Activated T-helper 2 cell treated with anti-CD3 and anti-CD28 coated beads, Interferon-gamma antibody, Interleukin-2, Interleukin-4, amounts not matched to agents 10 μg/mL and 5 μg/mL and 100 μg/mL, durations not matched to agents 14 hours and 24 hours and 36 hours (primary cell): ENCODE measurements at regions of chr1 and their contacts with region 1.

Region 1: GRCh38 chr1:204363335-204364124 is 3.8 kb upstream of the PLEKHA6 start:
- DNase-seq: peak; percentile 64
- H3K4me3 Mint-ChIP-seq: peak overlapping the region; percentile 71
- H3K27ac Mint-ChIP-seq: peak overlapping the region; percentile 82
- H3K4me1 Mint-ChIP-seq: peaks cover 48% of the 10 kb centered on the region
- H3K27me3 Mint-ChIP-seq: peaks cover 3% of the 10 kb centered on the region

Region 2: GRCh38 chr1:204151552-204152309 is 211.8 kb before region 1 on chr1 and contains the start of gene ETNK2:
- intact Hi-C with region 1: no loop called
- DNase-seq: peak; percentile 18
- H3K4me3 Mint-ChIP-seq: peak within 1 kb of the TSS; percentile 61
- H3K27ac Mint-ChIP-seq: no peak within 1 kb of the TSS
- H3K4me1 Mint-ChIP-seq: peaks cover 2% of the 10 kb centered on the region
- H3K27me3 Mint-ChIP-seq: peaks cover 26% of the 10 kb centered on the region
- total RNA-seq, gene ETNK2: 0.32 and 0.37 TPM in 2 replicates

Region 3: DNA sequence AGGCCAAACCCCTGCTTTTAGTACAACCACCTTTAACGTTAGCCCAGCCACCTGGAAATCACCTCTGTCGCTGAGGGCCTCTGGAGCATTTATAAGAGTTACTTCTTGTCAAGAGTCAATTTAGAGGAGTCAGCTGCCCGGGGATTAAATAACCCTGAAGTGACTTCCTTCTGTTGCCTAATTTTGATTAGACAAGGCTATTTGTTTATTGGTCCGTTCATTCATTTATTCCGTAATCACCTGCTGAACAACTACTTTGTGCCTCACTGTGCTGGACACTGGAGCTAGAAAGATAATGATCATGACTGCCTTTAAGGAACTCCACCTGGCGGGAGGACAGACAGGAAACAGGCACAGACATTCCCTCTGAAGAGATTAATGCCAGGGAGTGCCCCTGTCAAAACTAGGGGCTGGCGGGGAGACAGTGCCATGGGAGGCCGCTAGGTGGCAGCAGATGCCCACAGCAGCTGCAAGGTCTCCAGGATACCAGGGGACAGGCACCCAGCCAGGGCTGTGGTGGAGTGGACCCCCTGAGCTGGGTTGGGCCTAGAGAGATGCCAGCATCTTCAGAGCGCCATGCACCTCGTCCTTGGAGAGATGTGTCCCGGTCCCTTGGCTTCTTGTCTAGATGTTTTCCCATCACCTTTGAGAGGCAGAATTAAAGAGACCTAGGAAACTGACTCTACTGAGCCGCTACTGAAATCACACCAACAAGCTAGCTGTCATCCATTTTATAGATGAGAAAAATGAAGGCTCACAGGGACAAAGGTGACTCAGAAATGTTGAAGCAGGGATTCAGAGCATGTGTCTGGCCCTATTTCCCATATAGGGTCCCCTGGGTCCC is 201.1 kb before region 1 on chr1:
- intact Hi-C with region 1: loop called (anchors 1 kb)
- DNase-seq: peak; percentile 60
- H3K4me3 Mint-ChIP-seq: no peak overlapping the region
- H3K27ac Mint-ChIP-seq: no peak overlapping the region
- H3K4me1 Mint-ChIP-seq: peaks cover 2% of the 10 kb centered on the region
- H3K27me3 Mint-ChIP-seq: peaks cover 2% of the 10 kb centered on the region

Region 4: GRCh38 chr1:204213668-204214662 is 149.6 kb before region 1 on chr1 and contains the start of gene GOLT1A:
- intact Hi-C with region 1: loop called (anchors 1 kb)
- DNase-seq: peak; percentile 20
- H3K4me3 Mint-ChIP-seq: peak within 1 kb of the TSS; percentile 9
- H3K27ac Mint-ChIP-seq: no peak within 1 kb of the TSS
- H3K4me1 Mint-ChIP-seq: peaks cover 4% of the 10 kb centered on the region
- H3K27me3 Mint-ChIP-seq: peaks cover 12% of the 10 kb centered on the region
- total RNA-seq, gene GOLT1A: 0.21 TPM in 1 of 2 replicates, not detected in the other

Region 5: GRCh38 chr1:204296431-204296988 is 67.0 kb before region 1 on chr1:
- intact Hi-C with region 1: no loop called
- DNase-seq: no peak
- H3K4me3 Mint-ChIP-seq: no peak overlapping the region
- H3K27ac Mint-ChIP-seq: no peak overlapping the region
- H3K4me1 Mint-ChIP-seq: peaks cover 6% of the 10 kb centered on the region
- H3K27me3 Mint-ChIP-seq: peaks cover 20% of the 10 kb centered on the region

Region 6: GRCh38 chr1:204323887-204324286 is 39.6 kb before region 1 on chr1:
- intact Hi-C with region 1: loop called (anchors 2 kb)
- DNase-seq: no peak
- H3K4me3 Mint-ChIP-seq: no peak overlapping the region
- H3K27ac Mint-ChIP-seq: peak overlapping the region; percentile 87
- H3K4me1 Mint-ChIP-seq: peaks cover 28% of the 10 kb centered on the region
- H3K27me3 Mint-ChIP-seq: no peaks in the 10 kb centered on the region

Region 7: DNA sequence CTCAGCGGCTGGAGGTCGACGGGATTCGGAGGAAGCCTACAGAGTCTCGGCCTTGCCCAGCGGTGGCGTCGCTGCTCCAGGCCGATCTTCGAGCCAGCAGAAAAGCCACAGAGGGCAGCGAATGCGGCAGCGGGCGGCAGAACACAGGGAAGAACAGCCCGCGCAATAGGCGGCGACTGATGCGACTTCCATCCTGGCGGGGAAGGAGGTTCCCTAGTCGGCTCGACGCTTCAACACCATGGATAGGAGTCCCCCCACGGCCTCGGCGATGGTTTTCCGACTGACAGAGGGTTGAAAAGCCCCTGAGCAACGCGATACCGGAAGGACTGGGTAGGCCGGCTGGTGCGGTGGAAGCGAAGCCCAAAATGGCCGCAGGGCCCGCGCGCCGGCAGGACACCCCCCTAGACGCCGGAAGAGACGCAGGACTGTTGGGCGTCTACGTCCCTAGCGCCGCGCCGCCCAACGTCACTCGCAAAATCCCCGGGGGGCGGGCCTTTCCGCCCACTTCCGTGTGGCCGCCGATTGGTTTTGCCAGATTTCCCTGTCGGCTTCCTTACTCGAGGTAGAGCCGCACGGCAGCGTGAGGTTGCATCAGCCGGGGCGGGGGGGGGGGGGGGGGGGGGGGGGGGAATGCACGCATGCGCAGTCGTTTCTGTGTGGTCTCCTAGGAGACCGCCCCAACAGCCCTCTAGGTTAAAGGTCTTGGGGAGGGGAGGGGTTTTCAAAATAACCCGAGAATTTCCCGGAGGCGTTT is 48.1 kb after region 1 on chr1 and contains the start of gene PPP1R15B:
- intact Hi-C with region 1: loop called (anchors 5 kb)
- DNase-seq: peak; percentile 98
- H3K4me3 Mint-ChIP-seq: peak within 1 kb of the TSS; percentile 98
- H3K27ac Mint-ChIP-seq: peak within 1 kb of the TSS; percentile 98
- H3K4me1 Mint-ChIP-seq: peaks cover 14% of the 10 kb centered on the region
- H3K27me3 Mint-ChIP-seq: no peaks in the 10 kb centered on the region
- total RNA-seq, gene PPP1R15B: 63.4 and 64.3 TPM in 2 replicates

Region 8: GRCh38 chr1:204670152-204670927 is 306.8 kb after region 1 on chr1:
- intact Hi-C with region 1: no loop called
- DNase-seq: no peak
- H3K4me3 Mint-ChIP-seq: no peak overlapping the region
- H3K27ac Mint-ChIP-seq: no peak overlapping the region
- H3K4me1 Mint-ChIP-seq: no peaks in the 10 kb centered on the region
- H3K27me3 Mint-ChIP-seq: no peaks in the 10 kb centered on the region